ENCODE measurements at regions of chr3 and their contacts with region 1.

Region 1: GRCh38 chr3:185659942-185660921 is 74.1 kb downstream of the SENP2 start:
- DNase-seq: peak; percentile 44
- H3K4me3 ChIP-seq: no peak overlapping the region
- CTCF ChIP-seq: peak; percentile 95

Region 2: GRCh38 chr3:185677146-185677829 is 17.1 kb after region 1 on chr3:
- CTCF ChIA-PET with region 1: interaction called, 136 read pairs
- POLR2A ChIA-PET with region 1: no interaction called
- DNase-seq: no peak
- H3K4me3 ChIP-seq: no peak overlapping the region
- CTCF ChIP-seq: peak; percentile 55

Region 3: GRCh38 chr3:185733980-185734724 is 73.9 kb after region 1 on chr3:
- CTCF ChIA-PET with region 1: interaction called, 119 read pairs
- POLR2A ChIA-PET with region 1: interaction called, 3 read pairs
- DNase-seq: no peak
- H3K4me3 ChIP-seq: no peak overlapping the region
- CTCF ChIP-seq: peak; percentile 46

Region 4: GRCh38 chr3:185781759-185782158 is 121.5 kb after region 1 on chr3:
- CTCF ChIA-PET with region 1: interaction called, 21 read pairs
- POLR2A ChIA-PET with region 1: no interaction called
- DNase-seq: peak; percentile 62
- H3K4me3 ChIP-seq: no peak overlapping the region
- CTCF ChIP-seq: no peak

Region 5: DNA sequence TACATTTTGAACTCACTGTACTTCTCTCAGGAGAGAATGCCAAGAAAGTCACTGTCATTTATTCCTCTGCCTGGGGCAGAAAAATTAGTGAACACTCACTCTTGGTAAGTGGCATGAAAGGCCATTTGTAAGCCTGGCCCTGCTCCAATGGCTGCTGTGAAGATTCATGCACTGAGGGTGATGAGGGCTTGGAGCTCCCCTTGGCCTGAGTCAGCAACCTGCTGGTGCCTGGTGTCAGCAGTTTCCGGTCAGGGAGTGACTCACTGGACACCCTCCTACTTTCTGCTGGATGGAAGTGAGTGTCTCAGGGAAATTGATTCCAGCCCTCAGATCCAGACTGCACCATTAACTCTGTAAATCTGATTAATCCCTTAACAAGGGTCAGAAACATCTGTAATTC is 240.0 kb after region 1 on chr3:
- CTCF ChIA-PET with region 1: interaction called, 17 read pairs
- POLR2A ChIA-PET with region 1: no interaction called
- DNase-seq: peak; percentile 57
- H3K4me3 ChIP-seq: no peak overlapping the region
- CTCF ChIP-seq: no peak

Region 6: DNA sequence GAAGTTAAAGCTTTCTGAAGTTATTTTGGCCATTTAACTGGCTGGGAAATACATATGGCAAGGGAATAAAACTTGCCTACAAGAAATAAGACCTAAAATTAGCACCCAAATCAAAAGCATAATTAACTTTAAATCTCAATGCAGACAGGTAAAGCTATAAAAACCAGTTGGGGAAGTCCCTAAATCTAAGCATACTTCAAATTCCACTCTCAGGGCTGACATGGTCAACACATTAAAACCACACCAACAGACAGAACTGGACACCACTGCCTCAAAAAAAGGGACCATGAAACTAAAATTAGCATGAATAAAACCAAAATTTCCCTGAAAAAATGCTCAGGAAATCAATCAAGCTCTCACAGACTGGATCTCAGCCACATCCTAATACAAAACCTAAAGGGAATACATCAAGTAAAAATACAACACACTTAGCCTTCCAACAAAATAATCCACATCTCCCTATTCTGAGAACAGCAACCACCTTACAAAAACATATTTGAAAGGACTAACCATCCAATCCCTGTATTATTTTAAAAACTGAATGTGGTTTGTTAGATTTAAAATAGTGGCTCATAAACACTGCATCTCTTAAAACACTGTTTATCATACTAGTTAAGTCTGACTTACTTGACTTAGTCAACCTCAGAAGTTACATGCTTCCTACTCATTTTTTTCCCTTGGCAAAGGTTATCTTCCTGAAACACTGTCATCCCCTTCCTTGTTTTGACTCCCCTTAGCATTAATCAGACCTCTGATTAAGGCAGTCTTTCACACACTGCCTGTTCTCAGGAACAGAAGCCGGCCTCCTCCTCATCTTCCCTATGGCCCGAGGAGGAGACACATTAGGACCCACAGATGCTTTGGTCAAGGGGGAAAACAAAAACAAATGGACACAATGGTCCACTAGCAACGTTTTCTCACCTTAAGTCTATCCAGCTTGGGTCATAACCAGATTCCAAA is 269.2 kb after region 1 on chr3:
- CTCF ChIA-PET with region 1: interaction called, 36 read pairs
- POLR2A ChIA-PET with region 1: no interaction called
- DNase-seq: no peak
- H3K4me3 ChIP-seq: no peak overlapping the region
- CTCF ChIP-seq: no peak